Activated B cell treated with CpG ODN at 0.5 μM for 24 hours (primary cell): ENCODE measurements at regions of chr17 and their contacts with region 1.

Region 1: DNA sequence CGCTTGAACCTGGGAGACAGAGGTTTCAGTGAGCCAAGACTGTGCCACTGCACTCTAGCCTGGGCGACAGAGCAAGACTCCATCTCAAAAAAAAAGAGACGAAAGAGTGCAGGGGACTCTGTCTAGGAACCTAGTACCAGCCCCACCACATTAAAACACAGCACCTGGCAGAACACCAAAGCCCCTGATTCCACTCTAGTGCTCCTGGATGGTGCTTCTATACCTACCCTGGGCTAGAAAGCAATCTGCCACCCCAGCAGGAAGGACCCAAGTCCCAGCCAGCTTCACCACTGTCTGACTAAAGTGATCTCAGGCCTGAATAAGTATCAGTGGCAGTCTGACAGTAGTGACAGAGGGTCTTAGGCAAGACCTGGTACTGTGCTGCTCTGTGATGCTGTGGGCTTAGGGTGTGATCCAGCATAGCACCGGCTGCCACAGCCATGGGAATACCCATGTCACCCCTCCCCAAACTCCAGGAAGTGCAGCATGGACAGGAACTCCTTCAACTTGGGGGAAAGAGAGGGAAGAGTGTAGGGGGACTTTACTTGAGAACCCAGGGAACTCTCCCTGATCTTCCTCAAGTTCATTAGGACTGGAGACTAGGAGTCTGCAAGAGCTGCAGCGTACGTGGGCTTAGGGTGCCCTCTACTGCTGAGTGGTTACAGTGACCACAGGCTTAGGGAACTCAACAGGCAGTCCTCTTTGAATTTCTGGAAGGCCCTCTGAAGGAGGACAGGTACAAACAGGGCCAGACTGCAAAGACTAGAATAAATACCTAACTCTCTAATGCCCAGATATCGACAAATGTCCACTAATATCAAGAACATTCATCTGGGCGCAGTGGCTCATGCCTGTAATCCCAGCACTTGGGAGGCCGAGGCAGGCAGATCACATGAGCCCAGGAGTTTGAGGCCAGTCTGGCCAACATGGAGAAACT is 30.0 kb upstream of the RNF43 start:
- DNase-seq: peak; percentile 43
- ATAC-seq: peak; percentile 93
- H3K4me3 Mint-ChIP-seq: no peak overlapping the region
- H3K27ac Mint-ChIP-seq: no peak overlapping the region
- H3K4me1 Mint-ChIP-seq: peaks cover 11% of the 10 kb centered on the region
- H3K27me3 Mint-ChIP-seq: no peaks in the 10 kb centered on the region
- CTCF ChIP-seq: no peak

Region 2: DNA sequence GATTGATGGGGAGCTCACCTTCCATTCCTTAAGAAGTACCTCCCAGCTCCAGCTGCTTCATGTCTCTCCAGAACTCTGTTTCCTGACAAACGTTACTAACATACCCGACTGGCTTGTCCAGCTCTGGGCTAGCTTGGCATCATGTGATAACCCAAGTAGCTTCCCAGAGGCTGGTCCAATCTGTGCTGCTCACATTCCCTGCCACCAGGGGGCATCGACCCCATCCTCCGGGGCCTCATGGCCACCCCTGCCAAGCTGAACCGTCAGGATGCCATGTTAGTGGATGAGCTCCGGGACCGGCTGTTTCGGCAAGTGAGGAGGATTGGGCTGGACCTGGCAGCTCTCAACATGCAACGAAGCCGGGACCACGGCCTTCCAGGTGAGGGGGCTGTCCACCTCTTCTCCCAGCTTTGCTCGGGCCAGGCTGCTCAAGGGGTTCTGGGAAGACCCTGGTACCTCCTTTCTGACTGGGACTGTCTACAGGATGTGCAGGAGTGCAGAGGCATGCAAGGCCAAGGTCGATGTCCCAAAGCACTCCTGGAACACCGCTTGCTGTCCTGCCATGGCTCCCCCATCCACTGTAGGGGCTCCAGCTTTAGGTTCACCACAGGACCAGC is 247.2 kb before region 1 on chr17:
- CTCF ChIA-PET with region 1: interaction called, 3 read pairs
- POLR2A ChIA-PET with region 1: no interaction called
- intact Hi-C with region 1: loop called (anchors 1 kb)
- DNase-seq: peak; percentile 35
- ATAC-seq: peak; percentile 82
- H3K4me3 Mint-ChIP-seq: no peak overlapping the region
- H3K27ac Mint-ChIP-seq: no peak overlapping the region
- H3K4me1 Mint-ChIP-seq: peaks cover 2% of the 10 kb centered on the region
- H3K27me3 Mint-ChIP-seq: peaks cover 27% of the 10 kb centered on the region
- CTCF ChIP-seq: no peak

Region 3: DNA sequence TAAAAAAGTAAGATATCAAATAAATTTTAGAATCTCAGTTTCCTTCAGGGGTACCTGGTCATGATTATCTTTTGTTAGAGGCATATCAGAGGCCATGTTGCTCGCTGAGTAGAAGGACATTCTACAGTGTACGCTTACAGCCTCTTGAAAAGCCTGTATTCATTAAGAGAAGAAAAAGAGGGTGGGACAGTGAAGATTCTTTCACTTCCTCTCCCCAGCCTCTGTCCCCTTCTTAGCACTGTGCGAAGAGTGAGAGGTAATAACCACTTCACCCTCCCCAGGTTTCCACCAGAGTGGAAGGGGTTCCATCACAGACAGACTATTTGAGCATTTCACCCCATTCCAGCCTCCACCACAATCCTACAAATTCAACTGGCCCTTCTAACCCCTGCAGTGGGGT is 213.8 kb before region 1 on chr17:
- CTCF ChIA-PET with region 1: no interaction called
- POLR2A ChIA-PET with region 1: no interaction called
- intact Hi-C with region 1: no loop called
- DNase-seq: no peak
- ATAC-seq: peak; percentile 91
- H3K4me3 Mint-ChIP-seq: peak overlapping the region; percentile 47
- H3K27ac Mint-ChIP-seq: peak overlapping the region; percentile 69
- H3K4me1 Mint-ChIP-seq: peaks cover 30% of the 10 kb centered on the region
- H3K27me3 Mint-ChIP-seq: no peaks in the 10 kb centered on the region
- CTCF ChIP-seq: no peak

Region 4: DNA sequence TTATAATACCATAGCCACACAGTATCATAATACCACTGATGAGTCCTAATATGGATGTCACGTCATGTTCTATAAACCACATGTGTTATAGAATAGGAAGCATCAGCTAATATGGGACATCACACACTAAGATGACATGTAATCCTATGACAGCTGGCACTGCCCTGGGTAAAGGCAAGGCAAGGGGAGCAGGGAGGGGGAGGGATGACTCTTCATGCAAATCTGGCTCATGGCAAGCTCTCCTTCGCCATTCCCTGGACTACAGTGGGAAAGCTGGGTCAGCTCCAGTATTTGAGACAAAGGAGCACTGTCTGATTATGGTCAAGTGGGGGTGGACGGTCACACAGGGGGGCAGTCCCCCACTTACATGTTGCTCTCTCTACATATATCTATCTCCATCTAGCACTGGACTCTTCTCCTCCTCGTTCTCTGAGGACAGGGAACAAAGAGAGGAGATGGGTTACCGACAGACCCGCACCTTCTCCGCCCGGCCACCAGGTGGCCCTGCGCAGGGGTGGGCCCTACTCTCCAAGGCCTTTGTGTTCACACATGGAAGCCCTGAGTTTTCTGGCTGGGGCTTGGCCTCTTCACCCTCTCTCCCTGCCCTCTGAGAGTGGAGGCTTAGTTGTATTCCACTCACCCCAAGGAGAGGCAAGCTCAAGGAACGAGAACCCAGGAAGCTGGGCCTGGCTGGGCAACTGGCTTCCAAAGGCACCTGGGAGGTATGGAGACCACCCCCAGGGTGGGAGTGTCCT is 143.2 kb before region 1 on chr17:
- CTCF ChIA-PET with region 1: interaction called, 4 read pairs
- POLR2A ChIA-PET with region 1: no interaction called
- intact Hi-C with region 1: loop called (anchors 1 kb)
- DNase-seq: no peak
- ATAC-seq: peak; percentile 96
- H3K4me3 Mint-ChIP-seq: no peak overlapping the region
- H3K27ac Mint-ChIP-seq: no peak overlapping the region
- H3K4me1 Mint-ChIP-seq: peaks cover 7% of the 10 kb centered on the region
- H3K27me3 Mint-ChIP-seq: no peaks in the 10 kb centered on the region
- CTCF ChIP-seq: peak; percentile 32

Region 5: GRCh38 chr17:58367461-58367860 is 79.8 kb before region 1 on chr17:
- CTCF ChIA-PET with region 1: no interaction called
- POLR2A ChIA-PET with region 1: no interaction called
- intact Hi-C with region 1: no loop called
- DNase-seq: no peak
- ATAC-seq: no peak
- H3K4me3 Mint-ChIP-seq: no peak overlapping the region
- H3K27ac Mint-ChIP-seq: no peak overlapping the region
- H3K4me1 Mint-ChIP-seq: peaks cover 42% of the 10 kb centered on the region
- H3K27me3 Mint-ChIP-seq: no peaks in the 10 kb centered on the region
- CTCF ChIP-seq: no peak

Region 6: GRCh38 chr17:58875261-58875660 is 428.0 kb after region 1 on chr17:
- CTCF ChIA-PET with region 1: no interaction called
- POLR2A ChIA-PET with region 1: no interaction called
- intact Hi-C with region 1: no loop called
- DNase-seq: no peak
- ATAC-seq: no peak
- H3K4me3 Mint-ChIP-seq: no peak overlapping the region
- H3K27ac Mint-ChIP-seq: no peak overlapping the region
- H3K4me1 Mint-ChIP-seq: peaks cover 5% of the 10 kb centered on the region
- H3K27me3 Mint-ChIP-seq: peaks cover 3% of the 10 kb centered on the region
- CTCF ChIP-seq: no peak